AG04449 (cell line): ENCODE measurements at regions of chr17 and their contacts with region 1.

Region 1: GRCh38 chr17:5500589-5501391 is 14.4 kb downstream of the MIS12 start:
- DNase-seq: no peak
- H3K4me3 ChIP-seq: peak overlapping the region; percentile 77
- CTCF ChIP-seq: no peak

Region 2: GRCh38 chr17:5516060-5516792 is 15.4 kb after region 1 on chr17:
- CTCF ChIA-PET with region 1: interaction called, 3 read pairs
- POLR2A ChIA-PET with region 1: interaction called, 13 read pairs
- DNase-seq: peak; percentile 97
- H3K4me3 ChIP-seq: no peak overlapping the region
- CTCF ChIP-seq: no peak

Region 3: DNA sequence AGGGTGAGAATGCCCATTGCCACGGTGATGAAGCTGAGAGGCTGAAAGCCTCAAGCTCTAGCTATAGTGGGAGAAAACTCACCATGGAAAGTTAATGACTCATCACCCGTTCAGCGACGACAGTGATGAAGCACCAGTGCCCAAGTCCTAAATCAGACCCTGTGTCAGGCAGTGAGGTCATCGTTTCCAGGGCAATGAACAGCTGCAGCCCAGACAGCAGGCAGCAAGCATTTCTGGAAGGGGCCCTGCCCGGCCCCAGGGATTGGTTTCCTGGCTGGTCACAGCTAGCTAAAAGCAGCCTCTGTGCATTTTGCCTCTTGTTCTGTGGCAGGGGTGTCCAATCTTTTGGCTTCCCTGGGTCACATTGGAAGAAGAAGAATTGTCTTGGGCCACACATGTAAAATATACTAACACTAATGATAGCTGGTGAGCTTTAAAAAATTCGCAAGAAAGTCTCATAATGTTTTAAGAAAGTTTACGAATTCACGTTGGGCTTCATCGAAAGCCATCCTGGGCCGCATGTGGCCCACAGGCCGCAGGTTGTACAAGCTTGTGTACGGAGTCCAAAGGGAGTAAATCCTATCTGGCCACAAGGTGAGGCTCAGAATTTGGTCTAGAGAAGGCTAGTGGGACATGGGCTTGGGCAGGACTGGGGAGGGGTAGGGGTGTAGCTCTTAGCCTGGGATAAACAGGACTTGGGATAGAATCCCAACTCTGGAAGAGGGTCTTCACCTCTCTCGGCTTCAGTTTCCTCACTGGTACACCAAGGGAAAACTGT is 26.2 kb after region 1 on chr17:
- CTCF ChIA-PET with region 1: interaction called, 3 read pairs
- POLR2A ChIA-PET with region 1: interaction called, 15 read pairs
- DNase-seq: peak; percentile 85
- H3K4me3 ChIP-seq: no peak overlapping the region
- CTCF ChIP-seq: no peak

Region 4: DNA sequence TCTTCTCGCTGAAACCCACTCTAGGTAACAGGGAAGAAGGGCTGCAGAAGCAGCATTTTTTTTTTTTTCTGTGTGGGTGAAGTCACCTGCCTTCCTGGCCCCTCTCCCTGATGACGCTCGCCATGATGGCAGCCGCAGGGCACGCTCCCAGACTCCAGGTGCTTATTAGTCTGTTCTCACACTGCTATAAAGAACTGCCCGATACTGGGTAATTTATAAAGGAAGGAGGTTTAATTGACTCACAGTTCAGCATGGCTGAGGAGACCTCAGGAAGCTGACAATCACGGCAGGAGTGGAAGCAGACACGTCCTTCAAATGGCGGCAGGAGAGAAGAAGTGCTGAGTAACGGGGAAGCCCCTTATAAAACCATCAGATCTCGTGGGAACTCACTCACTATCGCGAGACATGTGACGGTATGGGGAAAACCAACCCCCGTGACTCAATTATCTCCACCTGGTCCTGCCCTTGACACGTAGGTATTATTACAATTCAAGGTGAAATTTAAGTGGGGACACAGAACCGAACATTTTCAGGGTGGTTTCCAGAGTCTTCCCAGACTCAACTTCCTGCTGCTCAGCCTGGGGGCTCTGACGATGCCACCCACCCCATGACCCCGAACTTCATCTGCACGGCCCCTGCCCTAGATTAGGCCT is 118.4 kb after region 1 on chr17:
- CTCF ChIA-PET with region 1: no interaction called
- POLR2A ChIA-PET with region 1: no interaction called
- DNase-seq: no peak
- H3K4me3 ChIP-seq: no peak overlapping the region
- CTCF ChIP-seq: no peak

Region 5: GRCh38 chr17:5644065-5644464 is 143.3 kb after region 1 on chr17:
- CTCF ChIA-PET with region 1: no interaction called
- POLR2A ChIA-PET with region 1: no interaction called
- DNase-seq: no peak
- H3K4me3 ChIP-seq: no peak overlapping the region
- CTCF ChIP-seq: no peak